ENCODE measurements at regions of chr3 and their contacts with region 1.

Region 1: GRCh38 chr3:122572940-122573412 is 4.5 kb upstream of the PARP15 start:
- DNase-seq: peak; percentile 77
- ATAC-seq: peak; percentile 47
- H3K4me3 ChIP-seq: no peak overlapping the region
- H3K27ac ChIP-seq: peak overlapping the region; percentile 59
- H3K4me1 ChIP-seq: peaks cover 29% of the 10 kb centered on the region
- H3K27me3 ChIP-seq: no peaks in the 10 kb centered on the region
- CTCF ChIP-seq: no peak
- EP300 ChIP-seq: peak; percentile 61 to 68; a peak in 2 of 4 replicates
- POLR2A ChIP-seq: no peak
- RAD21 ChIP-seq: no peak

Region 2: DNA sequence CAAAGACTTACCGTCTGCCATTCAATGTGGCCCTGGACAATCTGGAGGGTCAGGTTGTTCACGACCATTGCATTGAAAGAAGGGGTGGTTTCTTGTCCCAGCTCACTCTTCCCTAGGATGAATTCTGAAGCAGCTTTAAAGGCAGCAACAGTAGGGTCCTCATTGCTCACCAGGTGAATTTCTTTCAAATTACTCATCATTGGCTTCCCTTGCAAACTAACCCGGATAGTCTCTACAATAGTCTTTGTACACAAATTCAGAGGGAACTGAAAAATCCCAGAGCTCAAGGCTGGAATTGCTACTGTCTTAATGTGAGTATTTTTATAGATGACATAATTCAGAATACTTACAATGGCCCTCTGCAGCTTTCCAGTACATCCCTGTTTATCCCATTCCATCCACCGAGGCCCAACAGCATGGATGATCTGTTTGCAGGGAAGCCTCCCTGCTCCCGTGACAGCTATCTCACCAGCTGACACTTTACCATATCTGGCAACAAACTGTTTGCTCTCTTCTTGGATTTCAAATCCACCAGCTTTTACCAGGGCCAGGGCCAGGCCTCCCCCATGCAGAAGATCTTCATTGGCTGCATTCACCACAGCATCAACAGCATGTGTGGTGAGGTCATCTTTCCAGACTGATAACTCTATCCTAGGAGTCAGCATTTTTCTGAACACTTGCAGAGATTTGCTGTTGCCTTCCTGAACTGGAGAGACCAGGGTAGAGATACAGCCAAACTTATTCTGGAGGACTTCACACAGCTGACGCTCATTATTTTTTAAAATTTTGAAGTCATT is 17.5 kb before region 1 on chr3:
- CTCF ChIA-PET with region 1: interaction called, 3 read pairs
- POLR2A ChIA-PET with region 1: no interaction called
- RAD21 ChIA-PET with region 1: interaction called, 149 read pairs
- SMC1A ChIA-PET with region 1: interaction called, 51 read pairs
- in situ Hi-C with region 1: no loop called
- intact Hi-C with region 1: no loop called
- DNase-seq: no peak
- ATAC-seq: no peak
- H3K4me3 ChIP-seq: no peak overlapping the region
- H3K27ac ChIP-seq: no peak overlapping the region
- H3K4me1 ChIP-seq: no peaks in the 10 kb centered on the region
- H3K27me3 ChIP-seq: no peaks in the 10 kb centered on the region
- CTCF ChIP-seq: no peak
- EP300 ChIP-seq: no peak
- POLR2A ChIP-seq: no peak
- RAD21 ChIP-seq: no peak

Region 3: DNA sequence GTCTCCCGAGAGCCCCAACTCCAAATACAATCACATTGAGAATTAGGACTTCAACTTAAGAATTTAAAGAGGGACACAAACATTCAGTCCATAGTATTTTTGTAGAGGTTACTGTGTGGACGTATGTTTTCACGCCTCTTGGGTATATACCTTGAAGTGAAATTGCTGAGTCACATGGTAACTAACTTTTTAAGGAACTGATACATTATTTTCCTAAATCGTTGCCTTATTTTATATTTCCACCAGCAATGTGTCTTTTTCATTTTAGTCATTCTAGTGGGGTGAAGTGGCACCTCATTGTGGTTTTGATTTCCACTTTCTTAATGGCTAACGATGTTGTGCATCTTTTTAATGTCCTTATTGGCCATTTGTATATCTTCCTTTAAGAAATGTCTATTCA is 16.3 kb after region 1 on chr3:
- CTCF ChIA-PET with region 1: interaction called, 3 read pairs
- POLR2A ChIA-PET with region 1: interaction called, 15 read pairs
- RAD21 ChIA-PET with region 1: interaction called, 5 read pairs
- SMC1A ChIA-PET with region 1: interaction called, 11 read pairs
- in situ Hi-C with region 1: no loop called
- intact Hi-C with region 1: no loop called
- DNase-seq: peak; percentile 59
- ATAC-seq: peak; percentile 88
- H3K4me3 ChIP-seq: no peak overlapping the region
- H3K27ac ChIP-seq: no peak overlapping the region; the same call in none of the 2 replicates
- H3K4me1 ChIP-seq: peaks cover 4% of the 10 kb centered on the region; the same call in 1 of the 2 replicates
- H3K27me3 ChIP-seq: no peaks in the 10 kb centered on the region
- CTCF ChIP-seq: no peak
- EP300 ChIP-seq: peak in 1 of 2 experiments; percentile 73; a peak in 2 of 4 replicates
- POLR2A ChIP-seq: no peak
- RAD21 ChIP-seq: no peak

Region 4: DNA sequence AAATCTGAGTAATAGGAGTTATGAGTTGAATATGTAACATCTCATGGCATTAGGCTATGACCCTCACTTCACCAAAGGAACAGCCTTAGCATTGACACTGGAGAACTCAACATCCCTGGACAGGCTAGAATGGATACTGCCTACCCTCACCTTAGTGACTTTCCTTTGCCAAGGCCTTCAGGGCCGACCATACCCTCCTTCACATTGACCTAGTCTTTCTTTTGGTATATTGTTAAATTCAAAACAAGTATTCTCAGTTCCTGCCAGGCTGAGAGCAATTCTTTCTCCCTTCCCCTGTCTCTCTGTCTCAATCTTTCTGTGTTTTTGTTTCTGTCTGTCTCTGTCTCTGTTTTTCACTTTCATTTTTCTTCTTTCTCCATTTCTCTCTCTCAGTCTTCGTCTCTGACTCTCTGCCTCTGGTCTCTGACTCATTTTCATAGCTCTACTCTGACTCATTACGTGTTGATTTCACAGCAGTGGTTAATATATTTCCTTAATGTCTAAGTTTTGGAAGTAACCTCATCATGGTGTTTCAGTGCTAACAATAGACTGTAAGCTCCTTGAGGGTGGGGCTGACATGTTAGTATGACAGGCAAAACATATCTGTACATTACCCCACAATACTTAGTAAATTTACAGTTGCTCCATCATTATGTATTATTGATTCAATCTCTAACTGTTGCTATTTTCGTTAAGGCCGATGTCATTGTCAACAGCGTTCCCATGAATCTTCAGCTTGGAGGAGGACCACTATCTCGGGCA is 37.0 kb after region 1 on chr3:
- CTCF ChIA-PET with region 1: interaction called, 4 read pairs
- POLR2A ChIA-PET with region 1: interaction called, 4 read pairs
- RAD21 ChIA-PET with region 1: interaction called, 16 read pairs
- SMC1A ChIA-PET with region 1: interaction called, 10 read pairs
- in situ Hi-C with region 1: no loop called
- intact Hi-C with region 1: loop called (anchors 1 kb)
- DNase-seq: peak; percentile 98
- ATAC-seq: peak; percentile 96
- H3K4me3 ChIP-seq: no peak overlapping the region
- H3K27ac ChIP-seq: peak overlapping the region; percentile 75
- H3K4me1 ChIP-seq: peaks cover 22% of the 10 kb centered on the region
- H3K27me3 ChIP-seq: no peaks in the 10 kb centered on the region
- CTCF ChIP-seq: no peak
- EP300 ChIP-seq: peak; percentile 91 to 99
- POLR2A ChIP-seq: no peak
- RAD21 ChIP-seq: no peak; the same call in 1 of the 2 replicates

Region 5: DNA sequence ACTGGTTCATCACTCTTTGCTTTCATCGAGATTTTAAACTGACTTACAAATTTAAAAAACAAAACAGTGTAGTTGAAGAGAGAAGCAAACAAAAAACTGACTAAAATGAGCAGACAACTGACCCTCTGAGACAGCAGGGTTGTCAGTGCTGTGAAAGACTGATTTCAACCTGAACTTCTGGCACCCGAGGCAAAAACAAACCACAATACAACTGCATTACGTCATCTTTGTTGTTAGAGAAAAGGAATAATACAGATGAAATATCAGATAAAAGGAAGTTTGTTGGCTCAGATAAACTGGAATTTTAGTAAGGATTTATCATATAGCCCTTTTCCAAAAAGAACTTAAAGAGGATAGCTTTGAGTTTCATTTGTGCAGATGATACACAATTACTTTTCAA is 55.6 kb after region 1 on chr3:
- CTCF ChIA-PET with region 1: no interaction called
- POLR2A ChIA-PET with region 1: interaction called, 9 read pairs
- RAD21 ChIA-PET with region 1: interaction called, 16 read pairs
- SMC1A ChIA-PET with region 1: interaction called, 183 read pairs
- in situ Hi-C with region 1: no loop called
- intact Hi-C with region 1: no loop called
- DNase-seq: no peak
- ATAC-seq: no peak
- H3K4me3 ChIP-seq: no peak overlapping the region
- H3K27ac ChIP-seq: no peak overlapping the region
- H3K4me1 ChIP-seq: peaks cover 14% of the 10 kb centered on the region
- H3K27me3 ChIP-seq: no peaks in the 10 kb centered on the region
- CTCF ChIP-seq: no peak
- EP300 ChIP-seq: no peak
- POLR2A ChIP-seq: no peak
- RAD21 ChIP-seq: no peak

Region 6: GRCh38 chr3:122642935-122643334 is 70.0 kb after region 1 on chr3:
- CTCF ChIA-PET with region 1: interaction called, 3 read pairs
- POLR2A ChIA-PET with region 1: interaction called, 7 read pairs
- RAD21 ChIA-PET with region 1: interaction called, 31 read pairs
- SMC1A ChIA-PET with region 1: interaction called, 41 read pairs
- in situ Hi-C with region 1: no loop called
- intact Hi-C with region 1: no loop called
- DNase-seq: peak; percentile 65
- ATAC-seq: peak; percentile 78
- H3K4me3 ChIP-seq: no peak overlapping the region
- H3K27ac ChIP-seq: no peak overlapping the region
- H3K4me1 ChIP-seq: peaks cover 22% of the 10 kb centered on the region
- H3K27me3 ChIP-seq: no peaks in the 10 kb centered on the region
- CTCF ChIP-seq: no peak
- EP300 ChIP-seq: peak; percentile 38 to 43; a peak in 2 of 4 replicates
- POLR2A ChIP-seq: no peak
- RAD21 ChIP-seq: no peak

Measured in GM12878 (cell line).